ENCODE measurements at regions of chr1 and their contacts with region 1.

Region 1: GRCh38 chr1:149899460-149900293 is at the start of gene BOLA1:
- DNase-seq: peak; percentile 87 to 92
- H3K4me3 ChIP-seq: peak within 1 kb of the TSS; percentile 59 to 75 (median 64)
- H3K27ac ChIP-seq: peak within 1 kb of the TSS; percentile 70
- H3K4me1 ChIP-seq: peaks cover 0 to 7% (median 4%) of the 10 kb centered on the region in 4 experiments; a peak in 5 of 7 replicates
- H3K27me3 ChIP-seq: no peaks in the 10 kb centered on the region
- CTCF ChIP-seq: no peak
- EP300 ChIP-seq: no peak
- POLR2A ChIP-seq: peak in 1 of 2 experiments; percentile 80; a peak in 2 of 3 replicates
- RAD21 ChIP-seq: 0 out of 4 replicates have a peak, but pooled peaks of 1 of the 2 experiments have one; percentile 2
- total RNA-seq, gene BOLA1: 8.1 and 13.1 TPM in 2 replicates

Region 2: DNA sequence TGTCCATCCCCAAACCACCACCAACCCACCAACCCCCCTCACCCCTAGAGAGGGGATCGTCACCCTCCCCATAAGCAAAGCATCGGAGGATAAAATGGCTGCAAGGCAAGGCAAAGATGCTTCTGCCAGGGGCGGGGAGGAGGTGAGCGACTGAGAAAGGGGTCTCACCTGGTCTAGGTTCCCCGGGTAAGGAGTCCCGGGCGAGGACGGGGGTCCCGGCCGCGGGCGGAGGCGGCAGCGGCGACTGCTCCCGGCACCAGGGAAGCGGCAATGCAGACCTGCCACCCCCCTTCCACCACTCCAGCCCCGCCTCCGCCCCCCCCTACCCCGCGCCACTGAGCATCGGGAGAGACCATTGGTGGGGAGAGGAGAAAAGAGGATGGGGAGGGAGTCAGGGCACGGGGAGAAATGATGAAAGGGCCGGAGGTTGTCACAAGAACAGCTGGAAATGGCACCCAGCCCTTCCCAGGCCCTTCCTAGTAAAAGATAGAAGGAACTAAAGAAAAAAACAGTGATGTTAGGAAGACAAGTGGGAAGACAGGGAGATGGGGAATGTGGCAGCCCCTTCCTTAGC is 18.0 kb after region 1 on chr1 and contains the start of gene SV2A:
- CTCF ChIA-PET with region 1: interaction called, 4 read pairs
- POLR2A ChIA-PET with region 1: interaction called, 14 read pairs
- DNase-seq: peak in 1 of 2 experiments; percentile 72
- H3K4me3 ChIP-seq: peak within 1 kb of the TSS; percentile 85 to 99 (median 92)
- H3K27ac ChIP-seq: no peak within 1 kb of the TSS
- H3K4me1 ChIP-seq: peaks cover 4 to 19% (median 11%) of the 10 kb centered on the region in 4 experiments
- H3K27me3 ChIP-seq: no peaks in the 10 kb centered on the region
- CTCF ChIP-seq: no peak
- EP300 ChIP-seq: peak in 1 of 2 experiments; percentile 59; a peak in 1 of 3 replicates
- POLR2A ChIP-seq: peak in 1 of 2 experiments; percentile 50; a peak in 1 of 3 replicates
- RAD21 ChIP-seq: no peak
- total RNA-seq, gene SV2A: 51.8 and 52.9 TPM in 2 replicates

Region 3: DNA sequence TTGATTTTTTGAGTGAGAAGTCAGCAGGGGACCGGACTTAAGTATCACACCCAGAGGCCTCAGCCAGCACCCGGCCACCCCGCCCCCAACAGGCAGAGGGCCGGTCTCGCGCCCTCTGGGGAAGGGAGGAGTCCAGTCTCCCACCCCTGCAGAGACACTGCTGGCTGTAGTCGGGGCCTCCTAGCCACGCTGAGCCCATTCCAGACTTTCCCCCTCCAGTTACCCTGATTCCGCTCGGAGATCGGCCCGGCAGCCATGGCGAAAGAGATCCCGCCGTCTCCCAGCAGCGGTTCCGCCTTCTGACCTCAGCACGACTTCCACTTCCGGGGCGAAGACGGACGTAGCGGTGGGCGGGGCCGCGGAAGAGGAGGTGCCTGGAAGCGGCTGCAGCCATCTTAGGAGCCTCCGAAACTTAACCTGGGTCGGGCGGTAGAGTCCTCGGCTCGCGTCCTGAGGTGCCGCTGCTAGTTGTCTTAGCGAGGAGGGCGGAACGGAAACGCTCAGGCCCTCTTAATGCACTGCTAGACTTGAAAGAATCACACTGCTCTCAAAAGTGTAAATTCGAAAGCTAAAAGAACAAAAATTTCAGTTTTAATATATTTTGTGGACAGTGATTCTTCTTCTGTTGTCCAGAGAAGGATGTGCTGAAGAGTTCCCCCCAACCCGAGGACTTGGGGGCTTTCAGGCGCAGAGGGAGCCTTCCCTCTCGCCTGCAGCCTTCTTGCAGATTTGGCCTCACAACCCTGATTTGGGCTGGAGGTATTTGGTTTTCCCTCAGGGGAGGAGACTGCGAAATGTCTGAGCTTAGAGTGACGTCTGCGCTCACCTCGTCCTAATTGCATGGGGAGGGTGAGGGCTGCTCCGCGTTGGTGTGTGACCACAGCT is 28.1 kb after region 1 on chr1 and contains the start of gene SF3B4:
- CTCF ChIA-PET with region 1: interaction called, 3 read pairs
- POLR2A ChIA-PET with region 1: interaction called, 12 read pairs
- DNase-seq: peak in 1 of 2 experiments; percentile 92
- H3K4me3 ChIP-seq: peak within 1 kb of the TSS; percentile 85 to 95 (median 94)
- H3K27ac ChIP-seq: peak within 1 kb of the TSS; percentile 90
- H3K4me1 ChIP-seq: peaks cover 0 to 8% (median 4%) of the 10 kb centered on the region in 4 experiments; a peak in 4 of 7 replicates
- H3K27me3 ChIP-seq: no peaks in the 10 kb centered on the region
- CTCF ChIP-seq: no peak
- EP300 ChIP-seq: no peak
- POLR2A ChIP-seq: peak; percentile 92 to 93
- RAD21 ChIP-seq: 0 out of 4 replicates have a peak, but pooled peaks of 1 of the 2 experiments have one; percentile 5
- total RNA-seq, gene SF3B4: 119 and 122 TPM in 2 replicates